ENCODE measurements at regions of chr1 and their contacts with region 1.

Region 1: DNA sequence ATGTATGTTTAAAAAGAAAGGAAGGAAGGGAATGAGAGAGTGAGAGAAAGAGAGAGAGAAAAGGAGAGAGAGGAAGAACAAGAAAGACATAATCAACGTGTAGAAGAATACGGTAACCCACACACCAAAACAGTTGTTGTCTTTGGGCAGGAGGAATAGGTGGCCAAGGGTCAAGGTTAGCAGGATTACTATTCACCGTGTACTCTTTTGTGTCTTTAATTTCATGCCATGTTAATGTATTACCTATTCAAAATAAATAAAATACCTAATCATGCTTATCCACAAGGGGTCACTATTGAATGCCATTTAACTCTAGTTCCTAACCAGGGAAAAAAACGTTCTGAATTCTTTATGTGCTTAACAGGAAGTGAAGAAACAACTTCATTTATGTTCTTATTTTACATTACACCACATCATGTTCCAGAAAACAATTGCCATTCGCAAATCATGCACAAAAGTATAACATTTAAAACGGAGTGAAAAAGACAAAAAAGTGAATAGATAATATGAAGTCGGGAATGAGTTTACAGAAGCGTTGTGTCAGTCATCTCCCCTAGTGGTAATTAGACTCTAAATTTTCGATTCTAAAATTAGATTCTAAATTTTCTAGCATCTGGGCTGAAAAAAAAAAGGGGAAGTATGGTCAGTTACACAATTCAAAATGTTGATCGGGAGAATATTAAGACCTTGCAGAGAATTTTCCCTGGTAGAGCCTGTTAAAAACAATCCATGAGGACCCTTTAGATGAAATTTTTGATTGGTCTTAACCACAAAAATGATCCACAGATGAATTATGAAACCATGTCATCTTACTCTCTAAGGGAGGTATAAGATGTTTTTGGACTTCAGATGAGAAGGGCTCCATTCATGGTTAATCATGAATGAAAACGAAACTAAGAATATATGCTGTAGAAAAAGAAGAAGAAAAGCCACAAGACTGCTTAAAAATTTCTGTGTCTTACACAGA is 700 bp upstream of the KMO start:
- DNase-seq: peak; percentile 32 to 83 (median 51)
- ATAC-seq: peak; percentile 87
- H3K4me3 ChIP-seq: peak overlapping the region; percentile 31
- H3K27ac ChIP-seq: peak overlapping the region; percentile 48
- H3K4me1 ChIP-seq: peaks cover 0 to 4% of the 10 kb centered on the region in 2 experiments; a peak in 2 of 5 replicates
- H3K27me3 ChIP-seq: no peaks in the 10 kb centered on the region
- CTCF ChIP-seq: peak; percentile 55 to 91 (median 61)
- EP300 ChIP-seq: no peak; the same call in 1 of the 2 replicates
- POLR2A ChIP-seq: no peak
- RAD21 ChIP-seq: peak; percentile 95 to 97

Region 2: DNA sequence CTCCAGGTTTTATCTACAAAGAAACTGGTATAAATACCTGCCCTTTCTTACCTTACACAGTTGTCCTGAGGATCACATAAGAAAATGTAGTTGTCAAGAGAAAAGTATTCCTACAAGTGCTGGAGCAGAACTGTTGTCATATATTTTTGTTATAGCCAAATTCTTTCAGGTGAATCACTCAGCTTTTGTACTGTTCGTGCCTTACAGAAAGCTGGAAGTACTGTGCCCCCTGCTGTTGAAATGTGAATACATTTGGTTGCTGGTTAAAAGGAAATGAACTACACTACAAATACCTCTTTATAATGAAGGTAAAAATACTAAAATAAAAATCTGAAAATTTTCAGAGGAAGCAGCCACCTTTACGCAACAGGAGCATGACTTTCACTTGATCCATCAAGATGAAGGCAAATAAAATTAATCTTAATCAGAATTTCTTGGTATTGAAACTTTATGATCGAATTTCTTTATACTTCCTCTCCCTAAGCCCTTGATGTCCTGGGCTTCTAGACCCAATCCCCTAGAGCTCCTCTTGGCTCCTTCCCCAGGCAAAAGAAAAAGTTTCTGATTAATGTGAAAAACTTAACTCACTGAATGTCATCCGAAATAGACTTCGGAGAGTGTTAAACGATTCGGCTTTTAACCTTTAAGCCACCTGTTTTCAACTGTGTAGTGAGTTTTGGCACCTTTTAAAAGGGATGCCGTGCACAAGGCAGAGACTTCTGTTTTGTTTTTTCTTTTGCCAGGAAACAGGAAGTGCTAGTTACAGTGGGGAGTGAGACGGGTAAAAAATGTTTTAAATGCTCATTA is 96.2 kb after region 1 on chr1:
- CTCF ChIA-PET with region 1: interaction called, 43 read pairs
- POLR2A ChIA-PET with region 1: no interaction called
- in situ Hi-C with region 1: no loop called
- intact Hi-C with region 1: loop called (anchors 1 kb)
- DNase-seq: peak; percentile 39 to 78 (median 48)
- ATAC-seq: peak; percentile 86
- H3K4me3 ChIP-seq: no peak overlapping the region
- H3K27ac ChIP-seq: no peak overlapping the region
- H3K4me1 ChIP-seq: peaks cover 0 to 4% of the 10 kb centered on the region in 2 experiments; a peak in 1 of 5 replicates
- H3K27me3 ChIP-seq: no peaks in the 10 kb centered on the region
- CTCF ChIP-seq: peak; percentile 51 to 78 (median 55); a peak in 5 of 6 replicates
- EP300 ChIP-seq: no peak
- POLR2A ChIP-seq: no peak; the same call in 1 of the 2 replicates
- RAD21 ChIP-seq: peak; percentile 80 to 81

Region 3: GRCh38 chr1:241847796-241848685 is 316.6 kb after region 1 on chr1 and contains the start of gene EXO1:
- CTCF ChIA-PET with region 1: interaction called, 11 read pairs
- POLR2A ChIA-PET with region 1: no interaction called
- in situ Hi-C with region 1: no loop called
- intact Hi-C with region 1: no loop called
- DNase-seq: peak; percentile 91 to 99 (median 94)
- ATAC-seq: peak; percentile 94
- H3K4me3 ChIP-seq: peak within 1 kb of the TSS; percentile 66
- H3K27ac ChIP-seq: peak within 1 kb of the TSS; percentile 87
- H3K4me1 ChIP-seq: peaks cover 8 to 18% of the 10 kb centered on the region in 2 experiments; a peak in 3 of 5 replicates
- H3K27me3 ChIP-seq: no peaks in the 10 kb centered on the region
- CTCF ChIP-seq: peak; percentile 57 to 75 (median 72)
- EP300 ChIP-seq: no peak
- POLR2A ChIP-seq: peak; percentile 97
- RAD21 ChIP-seq: peak; percentile 37 to 47
- polyA plus RNA-seq, gene EXO1: 36.0 to 83.9 TPM

Region 4: GRCh38 chr1:241998412-241998921 is 467.0 kb after region 1 on chr1:
- CTCF ChIA-PET with region 1: interaction called, 4 read pairs
- POLR2A ChIA-PET with region 1: no interaction called
- in situ Hi-C with region 1: no loop called
- intact Hi-C with region 1: loop called (anchors 5 kb)
- DNase-seq: peak; percentile 81 to 85 (median 83)
- ATAC-seq: peak; percentile 97
- H3K4me3 ChIP-seq: peak overlapping the region; percentile 48
- H3K27ac ChIP-seq: no peak overlapping the region; the same call in 2 of the 3 replicates
- H3K4me1 ChIP-seq: peaks cover 0 to 4% of the 10 kb centered on the region in 2 experiments; a peak in 1 of 5 replicates
- H3K27me3 ChIP-seq: peaks cover 27 to 50% of the 10 kb centered on the region in 2 experiments
- CTCF ChIP-seq: peak; percentile 83 to 100 (median 95)
- EP300 ChIP-seq: no peak
- POLR2A ChIP-seq: no peak
- RAD21 ChIP-seq: peak; percentile 60 to 66

Measured in K562 (cell line).